ENCODE measurements at regions of chr16 and their contacts with region 1.

Region 1: GRCh38 chr16:15888072-15888976 is at the start of gene CEP20:
- DNase-seq: peak; percentile 100
- H3K4me3 ChIP-seq: peak within 1 kb of the TSS; percentile 78 to 94 (median 92)
- H3K27ac ChIP-seq: peak within 1 kb of the TSS; percentile 88 to 90
- H3K4me1 ChIP-seq: peaks cover 0 to 9% of the 10 kb centered on the region in 2 donors
- H3K27me3 ChIP-seq: no peaks in the 10 kb centered on the region
- CTCF ChIP-seq: peak; percentile 54 to 78 (median 65)
- POLR2A ChIP-seq: peak; percentile 53
- total RNA-seq, gene CEP20: 31.8 to 43.9 (median 40.8) TPM

Region 2: DNA sequence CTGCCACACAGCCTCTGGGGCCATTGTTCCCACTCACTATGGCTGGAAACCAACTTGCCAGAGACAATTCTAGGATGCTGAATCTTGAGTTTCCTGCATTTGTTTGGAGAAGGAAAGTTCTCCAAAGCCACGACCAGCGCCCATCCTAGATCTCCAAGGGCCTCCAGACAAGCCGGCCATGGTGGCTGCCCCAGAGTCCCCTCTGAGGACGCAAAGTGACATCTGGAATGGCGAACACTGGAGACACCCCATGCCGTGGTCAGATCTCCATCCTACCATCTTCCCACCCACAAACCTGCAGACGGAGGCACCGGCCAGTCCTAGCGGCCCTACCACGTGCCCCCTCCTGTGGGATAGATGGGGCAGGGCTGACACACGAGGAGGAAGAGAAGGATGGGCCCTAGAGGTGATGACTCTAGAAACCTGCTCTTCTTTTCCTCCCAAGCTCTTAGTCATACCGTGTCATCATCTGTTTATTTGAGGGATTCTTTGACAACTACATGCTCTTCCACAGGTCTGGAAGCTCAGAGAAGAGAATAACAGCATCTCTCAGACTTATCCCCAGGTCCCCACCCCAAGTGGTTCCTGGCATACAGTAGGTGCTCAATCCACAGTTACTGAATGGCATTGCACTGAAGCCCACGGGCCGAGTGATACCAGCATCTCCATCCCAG is 102.8 kb before region 1 on chr16:
- intact Hi-C with region 1: loop called (anchors 5 kb)
- DNase-seq: no peak
- H3K4me3 ChIP-seq: no peak overlapping the region
- H3K27ac ChIP-seq: no peak overlapping the region
- H3K4me1 ChIP-seq: no peaks in the 10 kb centered on the region
- H3K27me3 ChIP-seq: no peaks in the 10 kb centered on the region
- CTCF ChIP-seq: no peak
- POLR2A ChIP-seq: no peak

Region 3: GRCh38 chr16:15949210-15950160 is 61.2 kb after region 1 on chr16 and contains the start of gene ABCC1:
- intact Hi-C with region 1: loop called (anchors 10 kb)
- DNase-seq: no peak
- H3K4me3 ChIP-seq: peak within 1 kb of the TSS; percentile 74 to 97 (median 81)
- H3K27ac ChIP-seq: peak within 1 kb of the TSS; percentile 75 to 83
- H3K4me1 ChIP-seq: no peaks in the 10 kb centered on the region
- H3K27me3 ChIP-seq: no peaks in the 10 kb centered on the region
- CTCF ChIP-seq: no peak
- POLR2A ChIP-seq: no peak
- total RNA-seq, gene ABCC1: 14.6 to 26.9 (median 21.3) TPM

Measured in breast epithelium (tissue), 4 donors.